Activated CD4-positive, alpha-beta T cell treated with anti-CD3 and anti-CD28 coated beads for 36 hours (primary cell): ENCODE measurements at regions of chr10 and their contacts with region 1.

Region 1: DNA sequence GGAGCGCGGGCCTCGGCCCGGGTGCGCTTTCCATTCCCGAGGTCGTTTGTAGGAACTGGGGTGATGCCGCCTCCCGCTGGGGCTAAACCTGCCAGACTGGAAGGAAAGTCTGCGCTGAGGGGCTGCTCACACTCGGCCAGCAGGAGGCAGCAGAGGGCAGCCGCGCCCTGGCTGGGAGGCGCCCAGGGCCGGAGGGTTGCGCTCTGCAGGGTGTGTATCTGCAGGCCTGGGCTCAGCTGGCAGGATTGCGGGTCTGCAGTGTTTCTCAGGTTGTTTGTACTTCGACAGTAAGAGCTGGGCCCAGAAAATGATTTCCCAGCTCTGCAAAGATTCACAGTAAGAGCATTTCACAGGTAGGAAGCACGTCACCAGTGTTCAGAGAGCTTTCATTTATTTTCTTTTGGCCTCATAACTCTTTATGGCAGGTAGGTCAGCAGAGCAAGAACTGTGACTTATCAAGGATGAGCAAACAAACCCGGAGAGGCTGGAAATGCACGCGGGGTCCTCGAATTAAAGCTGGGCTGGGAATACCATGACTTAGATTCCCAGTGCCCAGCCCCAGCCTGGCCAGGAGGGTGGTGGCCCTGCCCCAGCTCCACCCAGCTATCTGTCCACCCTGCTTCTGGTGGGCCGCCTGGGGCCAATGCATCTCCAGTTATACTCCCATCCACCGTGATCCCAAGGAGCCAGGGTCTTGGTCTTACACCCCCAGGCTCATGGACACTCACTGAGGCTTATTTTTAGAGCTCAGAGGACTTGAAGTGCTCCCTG is 15.2 kb upstream of the PPP2R2D start:
- DNase-seq: peak; percentile 91
- ATAC-seq: peak; percentile 97
- H3K4me3 Mint-ChIP-seq: no peak overlapping the region
- H3K27ac Mint-ChIP-seq: no peak overlapping the region
- H3K4me1 Mint-ChIP-seq: peaks cover 17% of the 10 kb centered on the region
- H3K27me3 Mint-ChIP-seq: peaks cover 2% of the 10 kb centered on the region

Region 2: GRCh38 chr10:131900350-131901146 is 15.0 kb after region 1 on chr10 and contains the start of gene PPP2R2D:
- CTCF ChIA-PET with region 1: interaction called, 21 read pairs
- POLR2A ChIA-PET with region 1: interaction called, 3 read pairs
- intact Hi-C with region 1: no loop called
- DNase-seq: peak; percentile 97
- ATAC-seq: peak; percentile 83
- H3K4me3 Mint-ChIP-seq: peak within 1 kb of the TSS; percentile 93
- H3K27ac Mint-ChIP-seq: peak within 1 kb of the TSS; percentile 92
- H3K4me1 Mint-ChIP-seq: peaks cover 53% of the 10 kb centered on the region
- H3K27me3 Mint-ChIP-seq: peaks cover 7% of the 10 kb centered on the region
- total RNA-seq, gene PPP2R2D: 30.0 to 39.3 TPM

Region 3: GRCh38 chr10:131928248-131929095 is 42.9 kb after region 1 on chr10:
- CTCF ChIA-PET with region 1: interaction called, 5 read pairs
- POLR2A ChIA-PET with region 1: no interaction called
- intact Hi-C with region 1: loop called in 1 of 2 experiments (anchors 5 kb)
- DNase-seq: peak; percentile 80
- ATAC-seq: peak; percentile 87
- H3K4me3 Mint-ChIP-seq: peak overlapping the region; percentile 29
- H3K27ac Mint-ChIP-seq: peak overlapping the region; percentile 87
- H3K4me1 Mint-ChIP-seq: peaks cover 82% of the 10 kb centered on the region
- H3K27me3 Mint-ChIP-seq: no peaks in the 10 kb centered on the region

Region 4: GRCh38 chr10:131943021-131943814 is 57.6 kb after region 1 on chr10:
- CTCF ChIA-PET with region 1: interaction called, 14 read pairs
- POLR2A ChIA-PET with region 1: no interaction called
- intact Hi-C with region 1: loop called (anchors 1 kb)
- DNase-seq: peak; percentile 57
- ATAC-seq: peak; percentile 88
- H3K4me3 Mint-ChIP-seq: no peak overlapping the region
- H3K27ac Mint-ChIP-seq: peak overlapping the region; percentile 26
- H3K4me1 Mint-ChIP-seq: peaks cover 2% of the 10 kb centered on the region
- H3K27me3 Mint-ChIP-seq: no peaks in the 10 kb centered on the region

Region 5: GRCh38 chr10:131981429-131982184 is 96.0 kb after region 1 on chr10 and contains the start of gene BNIP3:
- CTCF ChIA-PET with region 1: interaction called, 4 read pairs
- POLR2A ChIA-PET with region 1: no interaction called
- intact Hi-C with region 1: loop called (anchors 1 to 5 kb)
- DNase-seq: peak; percentile 97
- ATAC-seq: peak; percentile 90
- H3K4me3 Mint-ChIP-seq: peak within 1 kb of the TSS; percentile 90
- H3K27ac Mint-ChIP-seq: peak within 1 kb of the TSS; percentile 79
- H3K4me1 Mint-ChIP-seq: peaks cover 36% of the 10 kb centered on the region
- H3K27me3 Mint-ChIP-seq: no peaks in the 10 kb centered on the region
- total RNA-seq, gene BNIP3: 200 to 256 TPM

Region 6: DNA sequence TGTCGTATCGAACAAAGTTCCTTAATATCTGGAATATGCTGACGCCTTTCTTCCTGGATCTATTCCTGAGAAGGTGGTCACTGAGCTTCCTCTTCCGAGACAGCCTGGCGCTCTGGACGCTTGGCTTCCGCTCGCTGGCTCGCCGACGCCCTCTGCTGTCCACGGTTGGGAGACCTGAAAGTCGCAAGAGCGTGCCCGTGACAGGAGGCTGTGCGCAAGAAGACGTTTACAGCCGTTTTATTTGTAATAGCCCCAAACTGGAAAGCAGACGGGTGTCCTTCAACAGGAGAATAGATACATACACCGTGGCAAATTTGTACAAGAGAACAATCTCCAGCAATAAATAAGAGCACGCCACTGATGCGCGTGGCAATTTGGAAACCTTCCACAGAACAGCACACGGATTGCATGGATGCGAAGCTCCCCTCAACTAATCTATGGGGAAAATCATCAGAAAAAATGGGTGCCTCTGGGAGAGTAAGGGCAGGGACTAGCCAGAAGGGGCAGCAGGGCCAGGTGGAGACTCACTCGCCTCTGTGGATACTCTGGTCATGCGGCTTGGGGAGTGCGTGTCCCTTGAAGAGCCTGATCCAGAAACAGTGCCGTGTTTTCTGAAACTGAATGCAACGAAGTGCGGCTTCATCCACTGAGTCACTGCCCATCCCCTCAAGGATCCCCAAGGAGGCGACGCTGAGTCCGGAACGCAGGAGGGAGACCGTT is 137.7 kb after region 1 on chr10:
- CTCF ChIA-PET with region 1: interaction called, 52 read pairs
- POLR2A ChIA-PET with region 1: no interaction called
- intact Hi-C with region 1: loop called (anchors 1 kb)
- DNase-seq: peak; percentile 90
- ATAC-seq: peak; percentile 94
- H3K4me3 Mint-ChIP-seq: no peak overlapping the region
- H3K27ac Mint-ChIP-seq: no peak overlapping the region
- H3K4me1 Mint-ChIP-seq: peaks cover 5% of the 10 kb centered on the region
- H3K27me3 Mint-ChIP-seq: peaks cover 22% of the 10 kb centered on the region

Region 7: DNA sequence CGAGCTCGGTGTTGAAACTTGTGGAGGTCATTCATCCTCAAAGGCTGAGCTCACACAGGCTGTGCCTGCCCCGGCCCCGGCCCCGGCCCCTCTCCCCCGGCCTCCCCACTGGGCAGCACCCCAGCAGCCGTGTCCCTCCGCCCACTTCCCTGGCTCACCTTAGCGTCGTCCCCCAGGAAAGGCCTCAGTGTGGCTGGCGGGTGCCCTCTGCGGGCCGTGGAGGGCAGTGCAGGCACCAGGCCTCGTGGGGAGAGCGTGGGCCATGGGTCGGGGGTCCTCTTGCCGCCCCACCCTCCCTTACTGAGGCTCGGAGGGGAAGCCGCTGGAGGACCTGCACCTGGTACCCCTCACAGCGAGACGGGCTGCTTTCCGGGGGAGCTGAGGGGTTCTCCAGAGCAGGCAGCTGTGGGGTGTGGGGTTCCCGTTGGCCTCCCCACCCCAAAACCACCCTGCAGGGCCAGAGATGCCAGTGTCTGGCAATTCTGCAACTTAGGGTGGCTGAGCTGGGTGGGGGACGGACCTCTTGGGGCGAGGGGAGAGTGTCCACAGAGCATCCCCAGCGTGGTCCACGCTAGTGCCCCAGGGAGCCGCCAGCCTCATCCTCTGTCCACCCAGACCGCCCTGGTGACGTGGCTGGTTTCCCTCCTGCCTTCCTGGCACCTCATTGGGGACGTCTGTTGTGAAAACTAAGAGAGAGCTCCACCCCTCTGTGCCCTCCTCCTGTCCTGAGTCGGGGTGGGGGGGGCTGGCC is 257.0 kb after region 1 on chr10:
- CTCF ChIA-PET with region 1: interaction called, 4 read pairs
- POLR2A ChIA-PET with region 1: no interaction called
- intact Hi-C with region 1: loop called (anchors 1 to 5 kb)
- DNase-seq: peak; percentile 73
- ATAC-seq: peak; percentile 92
- H3K4me3 Mint-ChIP-seq: no peak overlapping the region
- H3K27ac Mint-ChIP-seq: no peak overlapping the region
- H3K4me1 Mint-ChIP-seq: no peaks in the 10 kb centered on the region
- H3K27me3 Mint-ChIP-seq: peaks cover 2% of the 10 kb centered on the region